HepG2 (cell line): ENCODE measurements at regions of chr9 and their contacts with region 1.

Region 1: GRCh38 chr9:109192732-109193361 is 25.8 kb upstream of the FRRS1L start:
- DNase-seq: peak; percentile 49
- ATAC-seq: peak; percentile 92
- H3K4me3 ChIP-seq: no peak overlapping the region
- H3K27ac ChIP-seq: no peak overlapping the region
- H3K4me1 ChIP-seq: 0 out of 2 replicates have a peak, but pooled peaks cover 9% of the 10 kb centered on the region
- H3K27me3 ChIP-seq: peaks cover 0 to 1% of the 10 kb centered on the region in 2 experiments; a peak in 1 of 5 replicates
- CTCF ChIP-seq: peak; percentile 80
- EP300 ChIP-seq: no peak
- POLR2A ChIP-seq: no peak
- RAD21 ChIP-seq: peak; percentile 80

Region 2: DNA sequence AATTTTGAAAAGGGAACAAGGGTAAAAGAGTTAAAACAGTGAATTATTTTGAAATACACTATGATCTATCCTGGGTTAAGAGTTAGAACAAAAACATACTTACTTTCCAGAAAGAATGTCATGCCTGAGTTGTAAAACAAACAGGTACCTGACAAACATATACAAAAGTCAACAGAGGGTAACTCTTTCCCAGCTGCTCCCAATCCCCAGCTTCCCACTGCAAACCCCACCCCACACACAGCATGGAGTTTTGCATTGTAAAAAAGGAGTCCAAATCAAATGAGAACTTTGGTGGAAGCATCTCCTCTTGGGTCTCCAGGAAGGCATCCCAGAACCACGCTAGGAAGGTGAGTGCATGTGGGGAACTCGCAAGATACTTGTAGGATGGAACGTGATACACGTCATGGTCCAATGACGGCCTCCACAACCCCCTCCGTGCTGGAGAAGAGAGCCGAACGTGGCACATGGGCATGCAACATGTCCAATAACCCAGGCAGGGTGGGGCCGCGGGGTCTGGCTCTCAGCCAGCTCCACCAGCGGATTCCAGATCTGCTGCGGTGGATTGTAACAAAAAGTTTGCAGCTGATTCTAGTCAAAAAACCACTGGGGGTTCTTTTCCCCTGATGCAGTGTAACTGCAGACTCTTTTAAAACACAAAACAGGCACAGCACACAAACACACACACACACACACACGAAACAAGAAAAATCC is 72.2 kb after region 1 on chr9:
- CTCF ChIA-PET with region 1: no interaction called
- POLR2A ChIA-PET with region 1: no interaction called
- in situ Hi-C with region 1: no loop called
- intact Hi-C with region 1: no loop called
- DNase-seq: no peak
- ATAC-seq: peak; percentile 71; the same call in 2 of the 3 replicates
- H3K4me3 ChIP-seq: no peak overlapping the region
- H3K27ac ChIP-seq: peak overlapping the region; percentile 2
- H3K4me1 ChIP-seq: peaks cover 20% of the 10 kb centered on the region
- H3K27me3 ChIP-seq: no peaks in the 10 kb centered on the region
- CTCF ChIP-seq: no peak
- EP300 ChIP-seq: no peak
- POLR2A ChIP-seq: no peak
- RAD21 ChIP-seq: no peak

Region 3: GRCh38 chr9:109314011-109314531 is 121.2 kb after region 1 on chr9:
- CTCF ChIA-PET with region 1: no interaction called
- POLR2A ChIA-PET with region 1: no interaction called
- in situ Hi-C with region 1: no loop called
- intact Hi-C with region 1: loop called (anchors 2 kb)
- DNase-seq: peak; percentile 68
- ATAC-seq: peak; percentile 78
- H3K4me3 ChIP-seq: peak overlapping the region; percentile 7 to 54 (median 27); a peak in 5 of 6 replicates
- H3K27ac ChIP-seq: peak overlapping the region; percentile 53
- H3K4me1 ChIP-seq: peaks cover 99% of the 10 kb centered on the region
- H3K27me3 ChIP-seq: no peaks in the 10 kb centered on the region
- CTCF ChIP-seq: no peak
- EP300 ChIP-seq: peak in 1 of 2 experiments; percentile 28; a peak in 1 of 4 replicates
- POLR2A ChIP-seq: no peak
- RAD21 ChIP-seq: no peak

Region 4: GRCh38 chr9:109349421-109349846 is 156.6 kb after region 1 on chr9:
- CTCF ChIA-PET with region 1: interaction called, 11 read pairs
- POLR2A ChIA-PET with region 1: no interaction called
- in situ Hi-C with region 1: no loop called
- intact Hi-C with region 1: no loop called
- DNase-seq: no peak
- ATAC-seq: no peak
- H3K4me3 ChIP-seq: no peak overlapping the region
- H3K27ac ChIP-seq: no peak overlapping the region
- H3K4me1 ChIP-seq: peaks cover 13% of the 10 kb centered on the region
- H3K27me3 ChIP-seq: 0 out of 5 replicates have a peak, but pooled peaks cover 0 to 3% of the 10 kb centered on the region in 2 experiments
- CTCF ChIP-seq: no peak
- EP300 ChIP-seq: no peak
- POLR2A ChIP-seq: no peak
- RAD21 ChIP-seq: no peak

Region 5: GRCh38 chr9:109401168-109401989 is 208.5 kb after region 1 on chr9:
- CTCF ChIA-PET with region 1: interaction called, 7 read pairs
- POLR2A ChIA-PET with region 1: no interaction called
- in situ Hi-C with region 1: no loop called
- intact Hi-C with region 1: loop called (anchors 1 kb)
- DNase-seq: peak; percentile 65
- ATAC-seq: peak; percentile 100
- H3K4me3 ChIP-seq: no peak overlapping the region
- H3K27ac ChIP-seq: no peak overlapping the region
- H3K4me1 ChIP-seq: no peaks in the 10 kb centered on the region
- H3K27me3 ChIP-seq: no peaks in the 10 kb centered on the region
- CTCF ChIP-seq: peak; percentile 86
- EP300 ChIP-seq: no peak
- POLR2A ChIP-seq: no peak
- RAD21 ChIP-seq: peak; percentile 70